ENCODE measurements at regions of chr19 and their contacts with region 1.

Region 1: GRCh38 chr19:21396893-21397572 is at the start of gene ZNF493:
- DNase-seq: peak; percentile 91 to 92
- H3K4me3 ChIP-seq: peak within 1 kb of the TSS; percentile 71
- H3K4me3 Mint-ChIP-seq: peak within 1 kb of the TSS; percentile 87
- H3K27ac Mint-ChIP-seq: peak within 1 kb of the TSS; percentile 75
- H3K4me1 ChIP-seq: no peaks in the 10 kb centered on the region
- H3K4me1 Mint-ChIP-seq: no peaks in the 10 kb centered on the region
- H3K27me3 ChIP-seq: no peaks in the 10 kb centered on the region
- H3K27me3 Mint-ChIP-seq: no peaks in the 10 kb centered on the region
- CTCF ChIP-seq: no peak
- total RNA-seq, gene ZNF493: 8.4 and 9.3 TPM in 2 replicates

Region 2: GRCh38 chr19:21358768-21359451 is 38.1 kb before region 1 on chr19 and contains the start of gene ZNF738:
- CTCF ChIA-PET with region 1: no interaction called
- POLR2A ChIA-PET with region 1: interaction called, 4 read pairs
- intact Hi-C with region 1: loop called (anchors 2 kb)
- DNase-seq: peak; percentile 89 to 95
- H3K4me3 ChIP-seq: peak within 1 kb of the TSS; percentile 58
- H3K4me3 Mint-ChIP-seq: peak within 1 kb of the TSS; percentile 99
- H3K27ac Mint-ChIP-seq: peak within 1 kb of the TSS; percentile 100
- H3K4me1 ChIP-seq: no peaks in the 10 kb centered on the region
- H3K4me1 Mint-ChIP-seq: no peaks in the 10 kb centered on the region
- H3K27me3 ChIP-seq: no peaks in the 10 kb centered on the region
- H3K27me3 Mint-ChIP-seq: no peaks in the 10 kb centered on the region
- CTCF ChIP-seq: no peak
- total RNA-seq, gene ZNF738: 9.5 and 10.4 TPM in 2 replicates